ENCODE measurements at regions of chr6 and their contacts with region 1.

Region 1: DNA sequence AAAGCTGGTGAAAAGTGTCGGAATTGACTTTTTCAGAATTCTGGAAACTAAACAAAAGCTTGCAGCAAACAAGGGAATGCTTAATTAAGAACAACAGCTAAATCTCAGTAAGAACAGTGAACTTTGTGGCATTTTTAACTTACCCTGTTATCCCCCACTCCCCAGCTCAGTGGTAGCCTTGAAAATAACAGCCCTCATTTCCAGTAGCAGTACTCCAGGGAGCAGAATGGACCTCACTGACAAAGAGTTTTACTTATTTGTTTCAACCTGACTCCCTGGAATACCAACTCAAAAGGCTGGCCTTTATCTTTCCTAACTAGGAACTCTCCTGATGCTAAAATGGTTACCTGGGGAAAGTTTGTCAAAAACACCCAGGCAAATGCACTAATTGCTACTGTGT is 108.9 kb downstream of the IMPG1 start:
- DNase-seq: no peak
- H3K4me3 Mint-ChIP-seq: no peak overlapping the region
- H3K27ac Mint-ChIP-seq: no peak overlapping the region
- H3K4me1 Mint-ChIP-seq: no peaks in the 10 kb centered on the region
- H3K27me3 Mint-ChIP-seq: peaks cover 6% of the 10 kb centered on the region
- CTCF ChIP-seq: no peak

Region 2: DNA sequence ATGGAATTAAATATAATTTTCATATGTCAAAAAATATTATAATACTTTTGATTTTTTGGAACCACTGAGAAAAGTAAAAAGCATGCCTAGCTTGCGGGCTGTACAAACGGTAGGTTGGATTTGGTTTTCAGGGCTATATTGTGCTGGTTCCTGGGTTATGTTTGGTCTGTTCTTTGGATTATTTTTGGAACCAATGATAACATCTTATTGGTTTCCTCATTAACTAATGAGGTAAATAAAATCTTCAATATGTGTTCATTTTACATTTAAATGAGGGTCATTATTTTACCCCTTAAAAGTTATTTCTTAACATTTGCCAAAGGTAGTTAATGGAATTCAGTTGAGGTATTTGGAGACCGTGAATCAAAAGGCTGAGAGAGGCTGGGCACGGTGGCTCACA is 12.3 kb after region 1 on chr6:
- CTCF ChIA-PET with region 1: no interaction called
- intact Hi-C with region 1: loop called (anchors 2 kb)
- DNase-seq: no peak
- H3K4me3 Mint-ChIP-seq: no peak overlapping the region
- H3K27ac Mint-ChIP-seq: no peak overlapping the region
- H3K4me1 Mint-ChIP-seq: no peaks in the 10 kb centered on the region
- H3K27me3 Mint-ChIP-seq: no peaks in the 10 kb centered on the region
- CTCF ChIP-seq: no peak

Region 3: GRCh38 chr6:76342611-76343160 is 379.1 kb after region 1 on chr6:
- CTCF ChIA-PET with region 1: no interaction called
- intact Hi-C with region 1: no loop called
- DNase-seq: no peak
- H3K4me3 Mint-ChIP-seq: no peak overlapping the region
- H3K27ac Mint-ChIP-seq: no peak overlapping the region
- H3K4me1 Mint-ChIP-seq: no peaks in the 10 kb centered on the region
- H3K27me3 Mint-ChIP-seq: peaks cover 12% of the 10 kb centered on the region
- CTCF ChIP-seq: no peak